ENCODE measurements at regions of chr5 and their contacts with region 1.

Region 1: DNA sequence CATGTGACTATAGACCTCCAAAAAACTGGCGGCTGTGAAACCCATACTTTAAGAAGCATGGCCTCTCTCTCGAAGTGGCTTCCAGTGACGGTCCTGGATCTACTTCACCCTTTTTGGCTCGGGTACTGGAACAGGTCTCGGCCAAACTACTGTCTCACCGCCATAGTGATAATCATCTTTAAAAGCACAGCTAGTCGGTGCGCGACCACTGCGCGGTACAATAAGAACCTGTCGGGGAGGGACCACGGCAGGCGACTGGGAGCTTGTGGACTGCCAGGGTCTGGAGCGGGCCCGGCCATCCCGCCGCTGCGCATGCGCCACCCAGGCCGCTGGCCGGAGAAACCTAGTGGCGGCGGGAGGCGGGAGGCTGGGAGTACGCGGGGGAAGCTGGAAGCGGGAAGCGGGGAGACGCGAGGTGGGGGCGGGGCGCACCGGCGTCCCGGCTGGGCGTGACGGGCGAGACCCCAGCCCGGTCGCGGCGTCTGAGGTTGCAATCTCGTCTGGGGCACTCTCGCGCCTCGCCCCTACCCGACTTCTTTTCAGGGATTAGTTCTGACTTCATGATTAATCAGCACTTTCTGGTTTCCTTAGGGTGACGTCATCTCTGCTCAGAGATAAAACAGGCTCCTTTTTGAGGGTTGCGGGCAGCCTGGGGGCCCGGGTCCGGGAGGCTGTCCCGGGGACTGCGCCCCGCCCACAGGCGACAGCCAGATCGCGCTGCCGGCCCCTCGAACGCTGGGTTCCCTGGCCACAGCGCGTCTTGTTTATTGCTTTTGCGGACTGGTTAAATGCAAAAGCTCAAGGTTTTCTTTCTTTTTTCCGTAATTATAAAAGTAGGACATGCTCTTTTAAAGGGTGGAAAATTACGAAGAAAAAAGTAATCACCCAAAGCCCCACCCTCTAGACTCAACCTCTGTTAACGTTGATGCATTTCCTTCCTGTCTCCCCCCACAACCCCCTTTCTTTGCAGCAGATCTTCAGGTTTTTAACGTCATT is 266.8 kb downstream of the CWC27 start:
- DNase-seq: peak; percentile 50 to 93
- H3K4me3 ChIP-seq: peak overlapping the region; percentile 53 to 61
- H3K27ac ChIP-seq: peak overlapping the region; percentile 95 to 97
- H3K4me1 ChIP-seq: peaks cover 7 to 48% of the 10 kb centered on the region in 2 donors
- H3K27me3 ChIP-seq: no peaks in the 10 kb centered on the region
- CTCF ChIP-seq: no peak

Region 2: DNA sequence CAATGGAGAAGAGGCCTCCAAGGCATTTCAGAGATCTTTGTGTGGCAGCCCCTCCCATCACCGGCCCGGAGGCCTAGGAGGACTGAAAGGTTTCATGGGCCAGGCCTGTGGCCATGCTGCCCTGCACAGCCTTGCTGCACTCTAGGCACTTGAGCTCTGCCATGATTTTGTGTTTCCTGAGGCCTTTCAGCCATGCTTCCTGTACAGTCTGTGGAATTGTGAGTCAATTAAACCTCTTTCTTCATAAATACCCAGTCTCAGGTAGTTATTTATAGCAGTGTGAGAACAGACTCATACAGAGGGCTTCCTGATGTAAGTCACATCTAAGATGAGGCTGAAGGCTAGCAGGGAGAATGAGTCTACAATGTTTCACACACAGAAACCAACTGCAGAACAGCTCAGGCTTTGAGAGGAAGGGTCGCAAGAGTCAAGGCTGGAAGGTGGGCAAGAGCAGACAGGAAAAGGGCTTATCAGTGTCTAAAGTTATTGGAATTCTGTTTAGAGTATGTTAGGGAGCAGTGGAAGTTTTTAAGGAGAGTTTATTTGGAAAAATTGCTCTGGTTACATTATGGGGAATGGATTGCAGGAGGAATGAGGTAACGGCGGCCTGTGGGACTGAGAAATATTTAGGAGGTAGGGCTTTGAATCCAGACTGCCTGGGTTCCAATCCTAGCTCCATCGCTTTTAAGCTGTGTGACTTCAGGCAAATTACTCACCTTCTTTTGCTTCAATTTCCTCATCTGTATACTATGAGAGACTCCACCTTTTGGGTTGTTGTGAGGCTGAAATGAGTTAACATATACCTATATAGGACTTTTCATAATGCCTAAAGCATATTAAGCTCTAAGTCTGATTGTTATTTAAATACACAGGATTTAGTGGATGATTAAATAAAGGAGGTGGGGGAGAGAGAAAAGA is 24.4 kb after region 1 on chr5:
- intact Hi-C with region 1: loop called (anchors 1 kb)
- DNase-seq: no peak
- H3K4me3 ChIP-seq: no peak overlapping the region
- H3K27ac ChIP-seq: peak overlapping the region; percentile 56 to 72
- H3K4me1 ChIP-seq: peaks cover 3 to 27% of the 10 kb centered on the region in 2 donors
- H3K27me3 ChIP-seq: no peaks in the 10 kb centered on the region
- CTCF ChIP-seq: no peak

Region 3: GRCh38 chr5:65102828-65103711 is 67.6 kb after region 1 on chr5:
- intact Hi-C with region 1: loop called (anchors 2 kb)
- DNase-seq: peak in 1 of 2 donors; percentile 69
- H3K4me3 ChIP-seq: peak overlapping the region; percentile 69 to 84
- H3K27ac ChIP-seq: peak overlapping the region; percentile 66 to 77
- H3K4me1 ChIP-seq: peaks cover 0 to 3% of the 10 kb centered on the region in 2 donors
- H3K27me3 ChIP-seq: no peaks in the 10 kb centered on the region
- CTCF ChIP-seq: peak in 1 of 3 experiments; percentile 48

Region 4: GRCh38 chr5:65125591-65126541 is 90.4 kb after region 1 on chr5:
- intact Hi-C with region 1: loop called (anchors 5 kb)
- DNase-seq: peak in 1 of 2 donors; percentile 68
- H3K4me3 ChIP-seq: peak overlapping the region in 1 of 2 donors; percentile 10
- H3K27ac ChIP-seq: peak overlapping the region; percentile 74 to 83
- H3K4me1 ChIP-seq: peaks cover 0 to 15% of the 10 kb centered on the region in 2 donors
- H3K27me3 ChIP-seq: no peaks in the 10 kb centered on the region
- CTCF ChIP-seq: no peak

Region 5: DNA sequence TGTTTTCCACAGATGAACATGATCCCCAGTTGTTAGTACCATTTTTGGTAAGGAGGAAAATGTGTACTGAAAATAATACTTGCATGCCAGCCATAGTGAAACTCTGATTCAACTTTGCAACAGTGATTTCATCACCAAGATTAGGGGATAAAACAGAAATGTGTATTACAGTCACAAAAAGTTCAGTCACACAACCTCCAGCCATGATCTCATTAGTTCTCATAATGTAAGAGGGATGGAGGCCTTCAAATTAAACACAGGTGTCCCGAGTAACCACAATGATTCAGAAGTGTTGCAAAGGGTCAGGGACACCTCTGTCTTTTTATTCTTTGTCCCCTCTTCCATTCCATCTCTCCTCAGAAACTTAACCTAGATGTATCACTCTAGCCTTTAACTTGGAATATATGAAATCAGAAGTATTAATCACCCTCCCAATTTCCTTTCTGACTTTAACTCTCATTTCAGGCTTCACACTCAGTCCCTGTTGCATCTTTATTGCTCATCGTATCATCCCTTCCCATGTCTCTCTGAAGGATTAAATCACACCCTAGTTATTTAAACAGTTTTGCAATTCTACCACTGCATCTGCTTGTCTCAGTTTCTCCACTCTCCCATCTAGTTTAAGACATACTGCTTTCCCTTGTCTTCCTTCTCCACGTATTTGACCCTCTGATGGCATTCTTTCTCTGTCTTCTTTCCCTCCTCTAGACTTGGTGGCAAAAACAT is 155.0 kb after region 1 on chr5:
- intact Hi-C with region 1: loop called (anchors 10 kb)
- DNase-seq: no peak
- H3K4me3 ChIP-seq: no peak overlapping the region
- H3K27ac ChIP-seq: peak overlapping the region; percentile 50 to 74
- H3K4me1 ChIP-seq: no peaks in the 10 kb centered on the region
- H3K27me3 ChIP-seq: no peaks in the 10 kb centered on the region
- CTCF ChIP-seq: no peak

Region 6: DNA sequence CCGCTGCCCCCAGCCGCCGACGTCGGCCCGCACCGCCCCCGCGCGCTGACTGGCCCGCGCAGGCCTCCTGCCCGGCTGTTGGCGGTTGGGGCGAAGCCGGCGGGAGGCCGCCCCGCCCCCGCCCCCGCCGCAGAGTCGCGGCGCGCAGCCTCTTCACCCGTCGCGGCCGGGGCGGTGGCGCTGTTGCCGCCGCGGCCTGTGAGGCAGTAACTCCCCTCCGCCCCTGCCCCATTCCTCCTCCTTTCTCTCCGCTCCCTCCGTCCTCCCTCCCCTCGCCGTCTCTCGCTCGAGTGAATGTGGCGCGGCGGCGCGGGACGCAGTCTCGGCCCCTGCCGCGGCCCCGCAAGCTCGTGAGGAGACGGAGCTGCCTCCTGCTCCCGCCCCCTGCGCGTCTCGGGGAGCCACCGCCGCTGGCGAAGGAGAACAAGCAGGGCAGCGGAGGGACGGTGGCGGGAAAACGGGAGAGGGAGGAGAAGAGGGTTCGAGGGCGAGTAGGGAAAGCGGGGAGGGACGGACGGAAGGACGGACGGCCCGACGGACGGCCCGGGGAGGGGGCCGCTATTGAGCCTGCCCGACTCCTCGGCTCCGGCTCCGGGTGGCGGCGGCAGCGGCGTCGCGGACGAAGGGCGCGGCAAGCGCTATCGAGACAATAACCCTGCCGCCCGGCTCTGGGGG is 890.2 kb after region 1 on chr5:
- intact Hi-C with region 1: loop called (anchors 5 kb)
- DNase-seq: peak; percentile 18 to 90
- H3K4me3 ChIP-seq: peak overlapping the region; percentile 97 to 99
- H3K27ac ChIP-seq: peak overlapping the region; percentile 98 to 100
- H3K4me1 ChIP-seq: peaks cover 0 to 6% of the 10 kb centered on the region in 2 donors
- H3K27me3 ChIP-seq: no peaks in the 10 kb centered on the region
- CTCF ChIP-seq: peak in 2 of 3 experiments; percentile 28 to 39